Heart right ventricle (tissue), 16 donors: ENCODE measurements at regions of chr7 and their contacts with region 1.

Region 1: GRCh38 chr7:123355576-123356195 is 155.9 kb upstream of the SLC13A1 start:
- DNase-seq: no peak
- ATAC-seq: peak in 3 of 8 donors; percentile 42 to 53 (median 47)
- H3K4me3 ChIP-seq: no peak overlapping the region
- H3K27ac ChIP-seq: no peak overlapping the region
- H3K4me1 ChIP-seq: no peaks in the 10 kb centered on the region
- H3K27me3 ChIP-seq: no peaks in the 10 kb centered on the region
- CTCF ChIP-seq: peak in 2 of 9 donors; percentile 10 to 24

Region 2: DNA sequence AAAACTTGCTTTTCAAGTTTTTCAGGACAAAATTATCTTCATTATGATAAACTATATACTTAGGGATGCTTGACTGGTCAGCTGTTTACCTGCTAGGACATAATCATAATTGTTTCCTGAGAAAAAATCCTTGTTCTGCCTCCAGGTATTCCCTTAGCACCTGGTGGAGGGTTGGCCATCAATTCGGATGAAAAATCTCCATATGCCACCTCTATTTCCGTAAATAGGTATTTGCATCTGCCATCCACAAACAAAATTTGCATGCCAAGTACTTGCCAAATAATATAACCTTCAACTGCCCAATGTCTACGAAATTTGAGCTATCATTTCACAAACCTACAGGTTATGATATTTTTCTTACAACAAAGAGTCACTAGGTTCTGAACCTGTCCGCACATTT is 783.0 kb before region 1 on chr7:
- intact Hi-C with region 1: loop called in 1 of 10 experiments (anchors 5 kb)
- DNase-seq: no peak
- ATAC-seq: no peak
- H3K4me3 ChIP-seq: no peak overlapping the region
- H3K27ac ChIP-seq: no peak overlapping the region
- H3K4me1 ChIP-seq: no peaks in the 10 kb centered on the region
- H3K27me3 ChIP-seq: no peaks in the 10 kb centered on the region
- CTCF ChIP-seq: no peak